Posterior vena cava (tissue), 2 donors: ENCODE measurements at regions of chr1 and their contacts with region 1.

Region 1: DNA sequence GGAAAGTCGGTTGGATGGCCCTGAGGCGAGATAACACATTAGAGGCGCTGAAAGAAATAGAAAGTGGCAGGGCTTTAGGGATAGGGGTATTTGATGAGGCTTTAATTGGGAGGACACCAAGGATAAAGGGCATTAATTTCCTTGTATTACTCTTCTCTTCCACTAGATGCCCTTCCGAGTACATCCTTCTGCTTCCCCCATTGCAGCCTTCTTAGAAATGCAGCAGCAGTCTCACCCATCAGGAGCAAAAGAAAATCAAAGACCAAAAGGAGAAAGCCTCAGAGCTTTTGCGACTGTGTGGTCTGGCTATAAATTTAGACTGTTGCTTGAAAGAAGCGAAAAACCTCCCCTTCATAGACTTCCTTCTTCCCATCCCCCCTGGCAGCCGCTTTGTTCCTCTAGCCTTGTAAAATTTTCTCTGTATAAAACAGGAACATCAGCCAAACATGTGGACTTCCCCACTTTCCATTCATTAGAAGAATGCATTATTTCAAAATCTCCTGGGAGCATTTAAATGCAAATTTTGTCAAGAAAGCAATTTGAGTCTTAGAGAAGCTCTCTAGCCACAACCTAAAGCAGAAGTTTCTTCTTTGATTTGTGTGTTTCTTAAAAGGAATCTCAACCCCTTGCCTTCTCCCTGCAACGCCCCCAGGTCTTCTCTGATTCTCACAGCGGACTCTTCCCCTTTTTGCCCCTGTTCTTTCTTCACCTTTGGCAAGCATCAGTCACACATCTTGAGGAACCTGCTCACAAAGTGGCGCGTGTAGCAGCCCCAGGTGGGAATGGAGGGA is 76.6 kb downstream of the NDUFS5 start:
- DNase-seq: no peak

Region 2: DNA sequence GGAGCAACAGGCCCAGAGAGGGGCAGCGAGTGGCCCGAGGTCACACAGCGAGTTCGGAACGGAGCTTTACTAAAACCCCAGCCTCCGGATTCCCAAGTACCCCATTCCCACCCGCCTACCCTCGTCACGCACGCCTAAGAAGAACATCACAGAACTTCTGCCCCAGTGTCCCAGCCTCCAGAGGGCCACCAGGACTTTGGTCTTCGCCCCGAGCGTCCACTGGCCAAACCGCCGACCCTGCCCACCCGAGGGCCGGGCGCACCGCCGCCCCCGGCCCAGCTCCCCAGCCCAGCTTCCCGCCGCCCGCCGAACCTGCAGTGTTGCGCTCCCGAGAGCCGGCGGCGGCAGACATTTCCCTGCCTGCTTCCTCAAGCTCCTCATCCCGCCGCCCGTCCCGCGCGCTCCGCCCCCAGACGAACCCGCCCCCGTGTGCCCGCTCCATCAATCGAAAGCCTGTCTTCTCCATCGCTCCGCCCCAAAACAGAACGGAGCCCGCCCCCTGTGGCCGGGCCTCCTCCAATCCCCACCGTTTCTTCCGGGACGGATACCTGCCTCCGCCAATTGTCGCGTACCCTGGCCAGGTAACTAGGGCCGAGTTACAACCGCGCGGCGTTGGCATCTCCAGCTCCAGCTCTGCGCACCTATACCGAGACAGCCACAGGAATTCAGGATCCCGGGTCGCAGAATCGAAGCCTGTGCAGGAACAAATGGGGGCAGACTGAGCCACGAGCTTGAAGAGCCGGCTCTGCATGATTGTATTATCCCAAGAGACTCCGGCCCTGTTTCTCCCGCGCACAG is 1171.2 kb before region 1 on chr1:
- intact Hi-C with region 1: no loop called
- DNase-seq: peak; percentile 99

Region 3: GRCh38 chr1:39047374-39048229 is 55.1 kb before region 1 on chr1:
- intact Hi-C with region 1: no loop called
- DNase-seq: peak; percentile 89

Region 4: DNA sequence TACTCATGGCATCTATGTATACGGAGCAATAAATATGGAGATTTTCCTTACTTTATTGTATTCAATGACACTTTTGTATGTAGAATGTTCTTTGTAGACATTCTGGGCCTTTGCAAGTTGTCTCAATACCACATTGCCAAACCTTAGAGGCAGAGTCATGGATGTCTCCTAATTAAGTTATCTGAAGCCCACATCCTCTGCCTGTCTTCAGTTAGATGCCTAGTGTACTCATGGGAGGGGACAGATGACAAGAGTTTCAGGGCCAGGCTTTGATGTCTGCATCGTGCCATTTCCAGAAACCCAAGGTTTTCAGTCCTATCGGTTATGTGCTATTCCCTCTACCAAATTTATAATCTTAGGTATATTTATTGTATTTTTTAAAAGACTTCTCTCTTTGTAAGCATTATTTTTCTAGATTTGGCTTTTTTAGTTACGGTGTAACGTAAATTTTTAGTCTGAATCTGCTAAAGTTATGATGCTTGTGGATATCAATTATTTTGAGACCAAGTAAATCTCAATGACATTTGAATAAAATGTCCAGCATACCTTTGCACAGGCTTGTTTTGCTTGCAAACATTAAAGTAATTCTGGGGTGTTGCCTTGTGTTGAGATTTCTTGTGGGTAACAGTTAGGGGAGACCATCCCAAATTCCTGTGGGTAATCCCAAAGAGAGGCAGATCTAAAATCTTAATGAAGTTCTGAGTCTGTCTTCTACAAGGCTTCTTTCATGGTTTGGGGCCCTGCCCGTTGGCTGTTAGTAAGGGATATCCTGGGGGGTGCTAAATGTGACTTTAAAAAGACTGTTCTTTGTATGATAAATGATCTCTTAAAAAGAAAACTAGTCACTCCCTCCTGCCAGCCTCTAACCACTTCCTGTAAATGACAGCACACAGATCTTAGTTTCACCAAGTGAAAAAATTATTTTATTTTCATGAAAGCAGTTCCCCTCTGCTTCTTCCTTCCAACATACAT is 93.8 kb after region 1 on chr1:
- intact Hi-C with region 1: loop called (anchors 10 kb)
- DNase-seq: no peak

Region 5: DNA sequence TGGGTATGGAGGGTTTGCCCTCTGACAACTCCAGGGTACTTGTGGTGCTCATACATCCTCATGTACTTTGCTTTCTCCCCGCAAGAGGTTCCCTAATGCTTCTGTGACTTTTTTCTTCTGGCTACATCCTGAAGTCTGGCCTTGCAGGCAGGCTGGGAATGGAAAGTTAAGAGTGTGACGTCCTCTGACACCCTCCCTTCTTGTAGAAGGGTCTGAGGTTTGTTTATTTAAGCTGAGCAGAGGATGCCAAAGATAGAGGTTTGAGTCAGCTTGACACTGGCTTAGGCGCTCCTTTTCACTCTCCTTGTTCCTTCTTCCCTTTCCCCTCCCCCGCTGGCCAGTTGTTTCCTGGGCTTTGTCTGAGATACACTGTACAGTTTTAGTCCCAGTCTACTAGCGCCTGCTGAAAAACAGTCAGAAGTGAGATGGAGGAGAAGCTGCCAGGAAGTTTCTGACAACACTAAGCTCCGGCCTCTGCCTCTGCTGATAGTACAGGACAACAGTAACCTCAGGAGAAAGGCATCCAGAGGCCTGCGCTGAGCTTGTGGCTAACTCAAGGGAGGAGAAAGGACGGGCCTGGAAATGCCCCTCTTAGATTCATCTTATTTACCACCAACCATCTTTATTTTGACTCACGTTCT is 101.8 kb after region 1 on chr1 and contains the start of gene MACF1:
- intact Hi-C with region 1: loop called (anchors 10 kb)
- DNase-seq: peak; percentile 91
- total RNA-seq, gene MACF1: 596 to 609 TPM

Region 6: DNA sequence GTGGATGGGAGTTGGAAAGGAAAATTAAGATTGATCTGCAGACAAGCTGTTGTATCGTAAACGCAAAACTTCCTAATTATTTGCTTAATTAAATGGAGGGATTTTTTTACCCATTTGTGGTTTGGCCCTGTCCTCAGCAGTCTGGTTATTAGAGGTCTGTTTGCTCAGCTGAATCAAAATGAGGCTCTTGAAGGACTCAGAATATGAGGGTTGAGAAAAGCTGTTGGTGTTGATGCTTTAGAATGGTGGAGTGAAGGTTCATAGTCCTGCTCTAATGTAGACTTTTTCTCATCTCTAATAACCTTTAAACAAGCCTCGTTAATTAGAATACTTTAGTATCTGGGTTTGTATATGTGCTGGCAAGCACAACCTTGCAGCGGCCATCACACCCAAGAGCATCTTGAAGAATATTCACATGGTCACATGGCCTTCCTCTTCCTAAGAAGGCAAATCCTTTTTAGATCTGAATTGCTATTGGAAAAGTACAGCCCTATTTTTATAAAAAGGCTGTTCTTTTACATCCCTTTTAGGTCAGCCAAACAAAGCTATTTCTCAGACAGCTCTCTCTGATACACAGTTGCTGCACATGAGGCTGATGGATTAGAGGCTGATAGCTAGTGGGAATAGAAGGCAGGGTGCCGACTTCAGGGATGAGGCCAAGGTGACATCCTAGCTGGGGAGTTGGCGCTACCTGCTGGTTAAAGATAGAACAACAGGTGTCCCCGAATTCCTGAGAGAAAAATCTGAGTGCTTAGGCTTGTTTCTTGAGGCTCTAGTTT is 155.6 kb after region 1 on chr1:
- intact Hi-C with region 1: loop called in 1 of 2 experiments (anchors 5 kb)
- DNase-seq: no peak

Region 7: GRCh38 chr1:39538588-39539465 is 436.1 kb after region 1 on chr1:
- intact Hi-C with region 1: loop called (anchors 5 to 10 kb)
- DNase-seq: peak; percentile 89